H1 (cell line): ENCODE measurements at regions of chr1 and their contacts with region 1.

Region 1: GRCh38 chr1:214261206-214262123 is 19.5 kb upstream of the SMYD2 start:
- DNase-seq: peak in 1 of 2 experiments; percentile 95
- H3K4me3 ChIP-seq: no peak overlapping the region
- H3K27ac ChIP-seq: no peak overlapping the region
- H3K4me1 ChIP-seq: peaks cover 0 to 3% (median 0%) of the 10 kb centered on the region in 4 experiments; a peak in 2 of 7 replicates
- H3K27me3 ChIP-seq: 0 out of 7 replicates have a peak, but pooled peaks cover 0 to 1% (median 0%) of the 10 kb centered on the region in 4 experiments
- CTCF ChIP-seq: peak; percentile 89 to 96 (median 95)
- EP300 ChIP-seq: no peak
- POLR2A ChIP-seq: no peak
- RAD21 ChIP-seq: peak; percentile 91 to 93

Region 2: DNA sequence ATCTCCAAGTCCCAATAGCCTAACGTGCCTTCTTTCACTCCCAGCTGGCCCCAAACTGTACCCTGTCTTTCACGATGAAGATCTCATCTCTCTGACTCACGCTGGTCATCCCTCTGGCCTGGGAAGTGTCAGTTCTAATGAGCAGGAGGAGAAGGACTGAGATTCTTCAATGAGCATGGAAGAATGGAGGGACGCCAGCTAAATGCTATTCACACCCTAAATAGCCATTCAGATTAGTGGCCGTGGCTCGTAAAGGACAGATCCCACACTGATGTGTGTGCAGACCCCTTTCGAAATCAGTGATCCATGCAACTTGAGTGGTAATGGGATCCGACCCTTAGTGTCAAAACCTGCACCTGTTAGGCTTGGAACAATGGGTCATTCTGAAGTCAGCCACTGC is 56.4 kb before region 1 on chr1:
- CTCF ChIA-PET with region 1: interaction called, 25 read pairs
- POLR2A ChIA-PET with region 1: no interaction called
- DNase-seq: no peak
- H3K4me3 ChIP-seq: no peak overlapping the region
- H3K27ac ChIP-seq: no peak overlapping the region
- H3K4me1 ChIP-seq: peaks cover 0 to 9% (median 4%) of the 10 kb centered on the region in 4 experiments; a peak in 2 of 7 replicates
- H3K27me3 ChIP-seq: no peaks in the 10 kb centered on the region
- CTCF ChIP-seq: no peak
- EP300 ChIP-seq: no peak
- POLR2A ChIP-seq: no peak
- RAD21 ChIP-seq: no peak

Region 3: GRCh38 chr1:214234635-214235025 is 26.8 kb before region 1 on chr1:
- CTCF ChIA-PET with region 1: interaction called, 21 read pairs
- POLR2A ChIA-PET with region 1: no interaction called
- DNase-seq: no peak
- H3K4me3 ChIP-seq: no peak overlapping the region
- H3K27ac ChIP-seq: no peak overlapping the region
- H3K4me1 ChIP-seq: no peaks in the 10 kb centered on the region
- H3K27me3 ChIP-seq: peaks cover 0 to 1% (median 0%) of the 10 kb centered on the region in 4 experiments; a peak in 1 of 7 replicates
- CTCF ChIP-seq: no peak
- EP300 ChIP-seq: no peak
- POLR2A ChIP-seq: no peak
- RAD21 ChIP-seq: no peak

Region 4: DNA sequence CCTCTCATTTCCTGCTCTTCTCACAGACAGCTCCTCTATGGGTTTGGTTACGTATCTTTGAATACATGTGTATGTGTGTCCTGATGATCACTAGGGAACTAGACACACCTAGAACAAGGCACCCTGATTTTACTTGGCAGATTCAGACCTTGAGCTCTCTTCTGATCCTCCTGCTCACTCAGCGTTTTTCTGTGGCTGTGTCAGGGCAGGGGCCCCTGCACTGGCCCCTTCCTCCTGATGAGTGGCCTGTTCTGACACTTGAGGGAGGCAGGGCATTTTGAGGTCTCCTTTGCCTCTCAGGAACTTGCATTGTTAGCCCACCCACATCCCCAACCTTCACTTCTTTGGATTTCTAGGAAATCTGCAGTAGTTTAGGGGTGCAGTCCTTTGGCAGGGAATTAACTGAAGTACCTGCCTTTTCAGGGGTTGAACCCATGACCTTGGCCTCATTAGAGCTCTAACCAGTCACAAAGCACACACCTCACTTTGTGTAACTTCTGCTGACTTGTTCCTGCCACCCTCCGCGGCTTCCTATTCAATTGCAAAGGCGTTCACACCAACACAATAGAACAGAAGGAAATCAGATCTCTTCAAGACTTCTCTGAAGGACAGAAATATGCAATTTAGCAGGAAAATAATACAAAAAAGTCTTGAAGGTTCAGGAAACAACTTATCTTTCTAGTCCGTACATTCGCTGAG is 28.3 kb after region 1 on chr1:
- CTCF ChIA-PET with region 1: interaction called, 25 read pairs
- POLR2A ChIA-PET with region 1: no interaction called
- DNase-seq: peak; percentile 54 to 63
- H3K4me3 ChIP-seq: peak overlapping the region in 2 of 4 experiments; percentile 11 to 50; a peak in 4 of 8 replicates
- H3K27ac ChIP-seq: no peak overlapping the region
- H3K4me1 ChIP-seq: peaks cover 6 to 10% (median 7%) of the 10 kb centered on the region in 4 experiments
- H3K27me3 ChIP-seq: peaks cover 13 to 50% (median 42%) of the 10 kb centered on the region in 4 experiments
- CTCF ChIP-seq: no peak
- EP300 ChIP-seq: no peak
- POLR2A ChIP-seq: no peak
- RAD21 ChIP-seq: no peak

Region 5: DNA sequence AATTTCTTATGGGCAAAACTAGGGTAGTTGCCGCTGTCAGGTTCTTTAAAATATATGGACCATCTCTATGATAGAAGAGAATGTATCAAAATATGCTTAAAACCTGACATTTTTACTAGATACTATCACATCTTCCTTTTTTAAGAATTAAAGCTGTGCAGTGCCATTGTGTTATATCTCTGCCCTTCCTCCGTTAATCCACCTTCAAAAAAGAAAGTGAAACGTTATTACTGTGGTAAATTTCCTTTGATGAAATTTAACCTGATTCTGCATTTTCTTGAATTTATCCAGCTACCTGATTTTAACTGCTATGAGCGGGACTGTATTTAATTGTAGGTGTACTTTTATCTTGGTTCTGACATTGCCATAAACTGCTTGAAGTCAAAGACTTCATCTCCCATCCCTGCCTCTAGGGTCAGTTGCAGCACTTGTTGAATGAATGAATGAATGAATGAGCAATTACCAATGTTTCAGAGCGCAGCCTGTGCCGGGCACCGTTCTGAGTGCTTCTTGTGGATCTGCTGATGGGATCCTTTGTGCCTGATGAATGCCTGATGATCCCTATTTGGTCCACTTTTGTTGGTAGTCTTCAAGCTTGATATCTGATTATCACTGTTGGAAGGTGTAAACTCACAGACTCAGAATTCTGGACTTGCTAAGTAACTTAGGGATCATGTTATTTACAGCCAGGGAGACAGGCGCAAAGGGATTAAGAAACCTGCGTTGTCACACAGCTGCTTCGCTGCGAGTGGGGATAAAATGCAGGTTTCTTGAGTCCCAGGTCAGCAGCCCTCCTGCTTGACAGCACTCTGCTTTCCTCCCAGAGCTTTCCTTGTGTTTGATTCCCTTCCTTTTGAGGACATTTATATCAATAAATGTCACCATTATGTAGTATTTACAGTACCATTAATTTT is 49.6 kb after region 1 on chr1:
- CTCF ChIA-PET with region 1: interaction called, 98 read pairs
- POLR2A ChIA-PET with region 1: no interaction called
- DNase-seq: no peak
- H3K4me3 ChIP-seq: no peak overlapping the region
- H3K27ac ChIP-seq: no peak overlapping the region
- H3K4me1 ChIP-seq: peaks cover 1 to 13% (median 9%) of the 10 kb centered on the region in 4 experiments; a peak in 6 of 7 replicates
- H3K27me3 ChIP-seq: peaks cover 11 to 40% (median 24%) of the 10 kb centered on the region in 4 experiments; a peak in 5 of 7 replicates
- CTCF ChIP-seq: no peak
- EP300 ChIP-seq: no peak
- POLR2A ChIP-seq: no peak
- RAD21 ChIP-seq: no peak